Natural killer cell (primary cell): ENCODE measurements at regions of chr3 and their contacts with region 1.

Region 1: GRCh38 chr3:43540624-43541023 is 81.2 kb downstream of the ANO10 start:
- DNase-seq: no peak
- ATAC-seq: no peak
- H3K4me3 ChIP-seq: no peak overlapping the region
- H3K4me3 Mint-ChIP-seq: no peak overlapping the region
- H3K27ac ChIP-seq: no peak overlapping the region
- H3K27ac Mint-ChIP-seq: no peak overlapping the region
- H3K4me1 ChIP-seq: no peaks in the 10 kb centered on the region
- H3K4me1 Mint-ChIP-seq: no peaks in the 10 kb centered on the region
- H3K27me3 ChIP-seq: no peaks in the 10 kb centered on the region
- H3K27me3 Mint-ChIP-seq: no peaks in the 10 kb centered on the region
- CTCF ChIP-seq: no peak

Region 2: GRCh38 chr3:43405888-43406642 is 134.6 kb before region 1 on chr3:
- intact Hi-C with region 1: no loop called
- DNase-seq: no peak
- ATAC-seq: peak; percentile 86 to 93 (median 89)
- H3K4me3 ChIP-seq: no peak overlapping the region
- H3K4me3 Mint-ChIP-seq: peak overlapping the region; percentile 25
- H3K27ac ChIP-seq: no peak overlapping the region
- H3K27ac Mint-ChIP-seq: peak overlapping the region; percentile 76 to 78
- H3K4me1 ChIP-seq: peaks cover 8% of the 10 kb centered on the region
- H3K4me1 Mint-ChIP-seq: peaks cover 13 to 20% of the 10 kb centered on the region in 2 donors
- H3K27me3 ChIP-seq: no peaks in the 10 kb centered on the region
- H3K27me3 Mint-ChIP-seq: no peaks in the 10 kb centered on the region
- CTCF ChIP-seq: no peak

Region 3: GRCh38 chr3:44114142-44114541 is 573.5 kb after region 1 on chr3:
- intact Hi-C with region 1: loop called (anchors 10 kb)
- DNase-seq: peak in 1 of 2 donors; percentile 39
- ATAC-seq: no peak
- H3K4me3 ChIP-seq: no peak overlapping the region
- H3K4me3 Mint-ChIP-seq: no peak overlapping the region
- H3K27ac ChIP-seq: no peak overlapping the region
- H3K27ac Mint-ChIP-seq: no peak overlapping the region
- H3K4me1 ChIP-seq: no peaks in the 10 kb centered on the region
- H3K4me1 Mint-ChIP-seq: no peaks in the 10 kb centered on the region
- H3K27me3 ChIP-seq: no peaks in the 10 kb centered on the region
- H3K27me3 Mint-ChIP-seq: peaks cover 15 to 27% of the 10 kb centered on the region in 2 donors
- CTCF ChIP-seq: no peak

Region 4: DNA sequence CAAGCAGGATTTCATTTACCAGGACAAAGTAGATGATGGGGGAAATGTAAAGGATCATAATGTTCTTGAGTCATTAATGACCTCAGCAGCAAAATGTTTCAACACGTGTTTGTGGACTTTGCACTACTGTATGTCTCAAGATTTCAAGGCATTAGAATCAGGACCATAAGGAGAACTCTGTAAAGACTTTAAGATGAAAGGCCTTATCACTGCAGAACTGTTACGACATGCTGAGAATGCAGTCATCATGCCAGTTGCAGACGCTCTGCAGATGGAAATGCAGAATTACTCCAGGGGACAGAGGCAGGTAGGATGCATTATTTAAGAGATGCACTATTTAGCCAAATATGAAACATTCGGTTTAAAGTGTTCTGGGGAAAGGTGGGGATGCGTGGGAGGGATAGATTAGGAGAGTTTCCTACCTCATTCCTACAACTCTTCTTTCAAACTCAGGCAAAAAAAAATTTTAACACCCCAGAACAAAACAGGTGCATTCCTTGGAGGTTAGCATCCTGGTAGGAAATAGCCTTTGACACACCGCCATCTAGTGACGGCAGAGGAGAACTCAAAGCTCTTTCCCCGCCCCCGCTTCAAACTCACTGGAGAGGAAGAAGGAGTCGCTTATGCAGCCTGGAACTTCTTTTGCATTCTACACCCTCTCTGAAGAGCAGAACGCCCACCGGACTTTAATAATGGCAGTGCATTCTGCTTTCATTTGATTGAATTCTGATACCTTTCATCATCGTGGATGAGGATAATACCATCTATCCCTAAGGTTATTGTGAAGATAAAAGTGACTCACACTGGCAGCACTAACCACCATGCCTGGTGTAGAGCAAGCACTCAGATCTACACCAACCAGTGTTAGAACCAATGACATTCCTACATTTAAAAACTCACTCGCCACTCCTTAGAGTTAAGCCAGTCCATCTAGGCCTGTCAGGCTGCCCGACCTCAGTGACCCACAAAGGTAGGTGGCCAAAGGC is 658.0 kb after region 1 on chr3:
- intact Hi-C with region 1: loop called (anchors 1 kb)
- DNase-seq: peak; percentile 31 to 82
- ATAC-seq: peak; percentile 58 to 88 (median 79)
- H3K4me3 ChIP-seq: no peak overlapping the region
- H3K4me3 Mint-ChIP-seq: no peak overlapping the region
- H3K27ac ChIP-seq: no peak overlapping the region
- H3K27ac Mint-ChIP-seq: no peak overlapping the region
- H3K4me1 ChIP-seq: no peaks in the 10 kb centered on the region
- H3K4me1 Mint-ChIP-seq: no peaks in the 10 kb centered on the region
- H3K27me3 ChIP-seq: no peaks in the 10 kb centered on the region
- H3K27me3 Mint-ChIP-seq: peaks cover 19 to 37% of the 10 kb centered on the region in 2 donors
- CTCF ChIP-seq: peak; percentile 69

Region 5: DNA sequence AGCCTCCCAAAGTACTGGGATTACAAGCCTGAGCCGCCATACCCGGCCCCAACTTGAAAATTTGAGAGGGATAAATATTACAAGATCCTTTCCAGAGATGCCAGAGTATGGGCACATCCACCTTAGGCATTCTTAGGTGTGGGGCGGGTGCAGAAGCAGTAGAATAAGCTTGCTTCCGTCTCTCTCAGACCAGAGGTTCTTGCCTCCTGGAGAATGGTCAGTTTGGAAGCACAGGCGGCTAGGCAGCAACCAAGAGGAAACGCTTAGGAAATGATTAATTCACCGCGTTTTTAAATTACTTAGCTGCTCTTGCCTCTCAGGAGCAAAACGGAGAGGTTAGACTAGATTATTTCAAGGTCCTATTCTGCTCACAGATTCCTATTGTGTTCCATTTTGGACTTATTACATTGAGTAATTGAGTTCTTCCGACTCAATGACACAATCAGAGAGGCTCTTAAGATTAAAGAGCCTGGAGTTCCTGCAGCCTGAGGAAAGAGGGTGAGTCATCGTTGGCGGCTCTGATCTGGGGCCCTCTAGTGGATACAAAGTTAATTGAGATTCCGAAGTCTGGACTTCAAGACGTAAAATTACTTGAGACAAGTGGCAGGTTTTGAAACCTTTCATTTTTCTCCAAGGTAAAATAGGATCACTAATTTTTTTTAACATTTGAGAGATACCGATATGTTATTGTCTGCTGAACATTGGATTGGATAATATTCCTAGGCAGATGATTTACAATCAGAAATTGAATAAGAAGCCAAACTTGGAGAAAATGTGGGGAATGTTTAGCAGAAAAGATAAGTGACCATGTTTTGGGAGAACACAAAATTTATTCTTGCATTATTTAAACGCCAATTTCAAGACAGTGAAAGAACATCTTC is 695.2 kb after region 1 on chr3:
- intact Hi-C with region 1: loop called (anchors 2 kb)
- DNase-seq: peak in 1 of 2 donors; percentile 79
- ATAC-seq: peak; percentile 85 to 96 (median 91)
- H3K4me3 ChIP-seq: no peak overlapping the region
- H3K4me3 Mint-ChIP-seq: no peak overlapping the region
- H3K27ac ChIP-seq: no peak overlapping the region
- H3K27ac Mint-ChIP-seq: no peak overlapping the region
- H3K4me1 ChIP-seq: peaks cover 3% of the 10 kb centered on the region
- H3K4me1 Mint-ChIP-seq: peaks cover 13 to 16% of the 10 kb centered on the region in 2 donors
- H3K27me3 ChIP-seq: no peaks in the 10 kb centered on the region
- H3K27me3 Mint-ChIP-seq: peaks cover 4 to 19% of the 10 kb centered on the region in 2 donors
- CTCF ChIP-seq: peak; percentile 75